Gastrocnemius medialis (tissue), 4 donors: ENCODE measurements at regions of chr10 and their contacts with region 1.

Region 1: GRCh38 chr10:28179006-28179742 is 123.7 kb downstream of the MPP7 start:
- DNase-seq: no peak
- ATAC-seq: peak in 1 of 2 donors; percentile 56
- H3K4me3 ChIP-seq: no peak overlapping the region
- H3K27ac ChIP-seq: no peak overlapping the region
- H3K4me1 ChIP-seq: peaks cover 9 to 13% of the 10 kb centered on the region in 2 donors
- H3K27me3 ChIP-seq: no peaks in the 10 kb centered on the region
- CTCF ChIP-seq: peak; percentile 44 to 80 (median 71)
- POLR2A ChIP-seq: no peak

Region 2: DNA sequence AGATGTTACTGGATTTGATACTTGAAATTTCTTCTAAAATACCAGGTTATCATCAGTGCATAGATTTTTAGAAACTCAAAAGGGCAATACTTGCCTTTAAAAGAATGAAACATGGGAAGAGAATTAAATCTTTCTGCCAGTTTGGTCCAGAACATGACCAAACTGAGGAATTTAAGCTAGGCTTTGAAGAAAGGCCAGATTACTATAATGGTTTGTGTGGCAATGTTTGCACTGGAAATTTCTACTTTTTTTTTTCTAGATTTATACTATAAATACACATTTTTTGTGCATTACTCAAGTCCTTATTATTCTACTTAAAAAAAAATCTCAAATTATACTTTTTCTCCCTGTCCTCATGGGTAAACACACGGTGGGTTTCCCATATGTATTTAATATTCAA is 442.8 kb before region 1 on chr10:
- in situ Hi-C with region 1: loop called (anchors 10 to 25 kb)
- intact Hi-C with region 1: no loop called
- DNase-seq: no peak
- ATAC-seq: no peak
- H3K4me3 ChIP-seq: no peak overlapping the region
- H3K27ac ChIP-seq: no peak overlapping the region
- H3K4me1 ChIP-seq: peaks cover under 1% of the 10 kb centered on the region in 2 donors
- H3K27me3 ChIP-seq: peaks cover 0 to 18% (median 14%) of the 10 kb centered on the region in 3 donors
- CTCF ChIP-seq: no peak
- POLR2A ChIP-seq: no peak

Region 3: GRCh38 chr10:27742195-27743011 is 436.8 kb before region 1 on chr10:
- in situ Hi-C with region 1: loop called (anchors 10 to 25 kb)
- intact Hi-C with region 1: loop called (anchors 1 kb)
- DNase-seq: peak; percentile 35 to 52
- ATAC-seq: peak; percentile 71 to 78
- H3K4me3 ChIP-seq: peak overlapping the region; percentile 60 to 74 (median 64)
- H3K27ac ChIP-seq: peak overlapping the region in 3 of 4 donors; percentile 5 to 50 (median 19)
- H3K4me1 ChIP-seq: peaks cover 12 to 47% of the 10 kb centered on the region in 2 donors
- H3K27me3 ChIP-seq: peaks cover 55 to 76% (median 72%) of the 10 kb centered on the region in 3 donors
- CTCF ChIP-seq: peak; percentile 50 to 76 (median 64)
- POLR2A ChIP-seq: no peak